ENCODE measurements at regions of chr4 and their contacts with region 1.

Region 1: DNA sequence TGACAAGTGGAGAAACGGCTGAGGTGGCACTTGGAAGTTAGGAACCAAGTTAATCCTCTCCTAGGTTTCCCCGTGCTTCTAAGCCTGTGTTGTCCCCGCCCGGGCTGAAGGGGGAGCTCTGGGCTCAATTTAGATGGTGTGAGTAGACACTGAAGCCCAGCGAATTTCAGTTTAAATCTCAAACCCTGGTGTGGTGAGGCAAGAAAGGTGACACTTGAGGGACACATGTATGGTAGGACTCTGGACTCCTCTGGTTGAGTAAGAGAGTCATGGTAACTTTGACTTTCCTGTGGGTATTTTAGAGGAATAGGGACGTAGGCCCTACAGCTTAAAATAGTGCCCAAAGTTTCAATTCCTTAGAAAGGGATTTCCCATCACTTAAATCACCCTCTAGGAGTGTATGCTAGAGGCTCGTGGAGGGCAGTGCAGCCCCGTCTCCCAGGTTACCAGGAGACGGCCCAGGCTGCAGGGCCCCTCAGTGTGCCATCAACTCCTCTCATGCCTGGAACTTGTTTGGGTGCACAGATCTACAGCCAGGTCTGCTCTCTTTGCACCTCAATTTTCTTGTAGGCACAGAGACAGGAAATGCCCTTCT is 24.0 kb downstream of the HAND2 start:
- DNase-seq: peak; percentile 77
- H3K4me3 ChIP-seq: peak overlapping the region in 1 of 2 experiments; percentile 66; a peak in 2 of 4 replicates
- H3K27ac ChIP-seq: peak overlapping the region; percentile 82 to 99
- H3K4me1 ChIP-seq: peaks cover 8 to 51% of the 10 kb centered on the region in 2 experiments; a peak in 2 of 4 replicates
- H3K27me3 ChIP-seq: no peaks in the 10 kb centered on the region
- CTCF ChIP-seq: peak; percentile 84
- EP300 ChIP-seq: no peak
- RAD21 ChIP-seq: peak; percentile 83

Region 2: GRCh38 chr4:173334085-173334772 is 171.8 kb before region 1 on chr4 and contains the start of gene HMGB2:
- CTCF ChIA-PET with region 1: interaction called, 3 read pairs
- POLR2A ChIA-PET with region 1: interaction called, 21 read pairs
- DNase-seq: peak; percentile 97
- H3K4me3 ChIP-seq: peak within 1 kb of the TSS; percentile 96 to 99
- H3K27ac ChIP-seq: peak within 1 kb of the TSS; percentile 96 to 98
- H3K4me1 ChIP-seq: peaks cover 19 to 24% of the 10 kb centered on the region in 2 experiments
- H3K27me3 ChIP-seq: no peaks in the 10 kb centered on the region
- CTCF ChIP-seq: no peak
- EP300 ChIP-seq: no peak; a peak in 1 of 4 replicates
- RAD21 ChIP-seq: no peak
- polyA plus RNA-seq, gene HMGB2: 123 and 130 TPM in 2 replicates

Region 3: GRCh38 chr4:173448603-173449379 is 57.2 kb before region 1 on chr4:
- CTCF ChIA-PET with region 1: interaction called, 6 read pairs
- POLR2A ChIA-PET with region 1: interaction called, 13 read pairs
- DNase-seq: no peak
- H3K4me3 ChIP-seq: no peak overlapping the region
- H3K27ac ChIP-seq: peak overlapping the region; percentile 40 to 98; a peak in 3 of 4 replicates
- H3K4me1 ChIP-seq: peaks cover 19 to 28% of the 10 kb centered on the region in 2 experiments; a peak in 3 of 4 replicates
- H3K27me3 ChIP-seq: no peaks in the 10 kb centered on the region
- CTCF ChIP-seq: no peak
- EP300 ChIP-seq: peak in 1 of 2 experiments; percentile 68; a peak in 1 of 4 replicates
- RAD21 ChIP-seq: no peak

Region 4: DNA sequence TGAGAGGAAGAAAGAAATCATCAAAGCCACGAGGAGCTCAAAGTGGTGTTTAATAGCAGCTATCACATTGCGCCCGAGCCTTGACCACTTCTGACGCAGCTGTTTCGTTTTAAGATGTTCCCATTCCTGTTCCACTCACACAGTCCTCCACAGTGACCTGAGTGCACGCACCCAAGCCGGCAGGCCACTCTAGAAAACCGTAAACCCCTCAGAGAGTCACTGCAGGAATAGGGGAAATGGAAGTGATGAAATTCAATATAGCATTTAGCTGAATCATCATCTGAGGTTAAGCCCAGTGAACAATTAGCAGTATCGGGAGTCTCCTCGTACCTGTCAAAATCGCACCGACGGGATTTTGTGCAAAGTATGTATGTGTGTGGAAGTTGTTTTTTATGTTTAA is 41.9 kb after region 1 on chr4:
- CTCF ChIA-PET with region 1: no interaction called
- POLR2A ChIA-PET with region 1: no interaction called
- DNase-seq: no peak
- H3K4me3 ChIP-seq: no peak overlapping the region
- H3K27ac ChIP-seq: peak overlapping the region in 1 of 2 experiments; percentile 19; a peak in 2 of 4 replicates
- H3K4me1 ChIP-seq: peaks cover 0 to 4% of the 10 kb centered on the region in 2 experiments; a peak in 2 of 4 replicates
- H3K27me3 ChIP-seq: no peaks in the 10 kb centered on the region
- CTCF ChIP-seq: no peak
- EP300 ChIP-seq: no peak
- RAD21 ChIP-seq: no peak

Region 5: DNA sequence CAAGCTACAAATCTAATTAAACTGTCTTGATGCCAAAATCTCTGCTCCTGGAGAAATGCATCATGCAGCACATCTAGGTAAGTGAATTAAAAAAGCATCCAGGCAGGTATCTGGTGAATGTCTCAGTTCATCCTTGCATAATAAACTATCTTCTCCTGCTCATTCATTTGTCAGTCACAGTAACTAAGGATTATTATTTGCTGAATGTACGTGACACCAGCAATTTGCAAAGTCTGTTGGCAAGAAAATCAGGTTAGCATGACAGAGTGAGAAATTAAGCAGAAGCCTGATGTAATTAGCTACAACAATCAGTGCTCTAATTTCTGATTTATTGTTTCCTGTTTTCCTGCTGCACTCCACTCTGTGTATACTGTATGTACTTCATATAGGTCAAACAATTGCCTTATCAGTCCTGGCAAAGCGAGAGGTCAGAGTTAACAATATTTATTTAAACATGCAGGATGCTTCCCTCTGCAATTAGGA is 563.9 kb after region 1 on chr4:
- CTCF ChIA-PET with region 1: no interaction called
- POLR2A ChIA-PET with region 1: interaction called, 21 read pairs
- DNase-seq: peak; percentile 69
- H3K4me3 ChIP-seq: no peak overlapping the region
- H3K27ac ChIP-seq: peak overlapping the region in 1 of 2 experiments; percentile 100; a peak in 2 of 4 replicates
- H3K4me1 ChIP-seq: peaks cover 0 to 26% of the 10 kb centered on the region in 2 experiments; a peak in 2 of 4 replicates
- H3K27me3 ChIP-seq: no peaks in the 10 kb centered on the region
- CTCF ChIP-seq: no peak
- EP300 ChIP-seq: peak; percentile 82 to 100
- RAD21 ChIP-seq: peak; percentile 46